ENCODE measurements at regions of chr13 and their contacts with region 1.

Region 1: DNA sequence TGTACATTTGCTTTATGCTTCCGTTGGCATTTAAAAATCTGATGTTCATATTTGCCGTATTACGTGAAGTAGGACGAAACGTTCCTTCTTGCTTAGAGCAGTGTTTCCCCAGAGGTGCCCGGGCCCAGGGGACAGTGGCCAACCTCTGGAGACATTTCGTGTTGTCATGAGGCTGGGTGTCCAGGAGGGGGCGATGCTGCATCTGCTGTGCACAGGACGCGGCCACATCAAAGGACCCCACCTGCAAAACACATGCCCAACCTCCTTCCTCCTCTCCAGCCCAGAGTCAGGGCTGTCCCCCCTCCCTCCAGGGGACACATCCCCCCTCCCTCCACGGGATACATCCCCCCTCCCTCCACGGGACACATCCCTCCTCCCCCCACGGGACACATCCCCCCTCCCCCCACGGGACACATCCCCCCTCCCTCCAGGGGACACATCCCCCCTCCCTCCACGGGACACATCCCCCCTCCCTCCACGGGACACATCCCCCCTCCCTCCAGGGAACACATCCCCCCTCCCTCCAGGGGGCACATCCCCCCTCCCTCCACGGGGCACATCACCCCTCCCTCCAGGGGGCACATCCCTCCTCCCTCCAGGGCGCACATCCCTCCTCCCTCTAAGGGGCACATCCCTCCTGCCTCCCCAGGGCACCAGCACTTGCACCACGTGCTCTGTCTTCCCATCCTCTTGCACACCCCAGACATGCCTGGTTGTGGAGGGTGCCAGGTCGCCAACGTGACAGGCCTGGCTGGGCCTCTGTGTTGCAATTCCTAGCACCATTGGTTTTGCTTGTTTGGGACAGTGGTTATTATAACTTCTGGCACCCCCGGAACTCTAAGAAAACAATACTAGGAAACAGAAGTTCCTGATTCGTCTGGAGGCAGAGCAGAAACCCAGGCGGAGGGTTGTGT is 46.7 kb downstream of the GAS6 start:
- DNase-seq: peak; percentile 79
- H3K4me3 Mint-ChIP-seq: peak overlapping the region; percentile 92
- H3K27ac Mint-ChIP-seq: peak overlapping the region; percentile 72
- H3K4me1 Mint-ChIP-seq: peaks cover 22% of the 10 kb centered on the region
- H3K27me3 Mint-ChIP-seq: no peaks in the 10 kb centered on the region

Region 2: GRCh38 chr13:113970810-113971470 is 153.7 kb after region 1 on chr13:
- intact Hi-C with region 1: no loop called
- DNase-seq: no peak
- H3K4me3 Mint-ChIP-seq: no peak overlapping the region
- H3K27ac Mint-ChIP-seq: no peak overlapping the region
- H3K4me1 Mint-ChIP-seq: no peaks in the 10 kb centered on the region
- H3K27me3 Mint-ChIP-seq: no peaks in the 10 kb centered on the region

Region 3: GRCh38 chr13:113997845-113998668 is 180.9 kb after region 1 on chr13:
- intact Hi-C with region 1: no loop called
- DNase-seq: no peak
- H3K4me3 Mint-ChIP-seq: no peak overlapping the region
- H3K27ac Mint-ChIP-seq: no peak overlapping the region
- H3K4me1 Mint-ChIP-seq: no peaks in the 10 kb centered on the region
- H3K27me3 Mint-ChIP-seq: no peaks in the 10 kb centered on the region

Region 4: GRCh38 chr13:114065141-114065925 is 248.1 kb after region 1 on chr13:
- intact Hi-C with region 1: loop called (anchors 2 kb)
- DNase-seq: peak; percentile 58
- H3K4me3 Mint-ChIP-seq: peak overlapping the region; percentile 72
- H3K27ac Mint-ChIP-seq: peak overlapping the region; percentile 91
- H3K4me1 Mint-ChIP-seq: peaks cover 51% of the 10 kb centered on the region
- H3K27me3 Mint-ChIP-seq: no peaks in the 10 kb centered on the region

Region 5: GRCh38 chr13:114128624-114129522 is 311.7 kb after region 1 on chr13:
- intact Hi-C with region 1: loop called (anchors 5 kb)
- DNase-seq: peak; percentile 84
- H3K4me3 Mint-ChIP-seq: peak overlapping the region; percentile 98
- H3K27ac Mint-ChIP-seq: peak overlapping the region; percentile 88
- H3K4me1 Mint-ChIP-seq: peaks cover 68% of the 10 kb centered on the region
- H3K27me3 Mint-ChIP-seq: peaks cover 2% of the 10 kb centered on the region

Region 6: DNA sequence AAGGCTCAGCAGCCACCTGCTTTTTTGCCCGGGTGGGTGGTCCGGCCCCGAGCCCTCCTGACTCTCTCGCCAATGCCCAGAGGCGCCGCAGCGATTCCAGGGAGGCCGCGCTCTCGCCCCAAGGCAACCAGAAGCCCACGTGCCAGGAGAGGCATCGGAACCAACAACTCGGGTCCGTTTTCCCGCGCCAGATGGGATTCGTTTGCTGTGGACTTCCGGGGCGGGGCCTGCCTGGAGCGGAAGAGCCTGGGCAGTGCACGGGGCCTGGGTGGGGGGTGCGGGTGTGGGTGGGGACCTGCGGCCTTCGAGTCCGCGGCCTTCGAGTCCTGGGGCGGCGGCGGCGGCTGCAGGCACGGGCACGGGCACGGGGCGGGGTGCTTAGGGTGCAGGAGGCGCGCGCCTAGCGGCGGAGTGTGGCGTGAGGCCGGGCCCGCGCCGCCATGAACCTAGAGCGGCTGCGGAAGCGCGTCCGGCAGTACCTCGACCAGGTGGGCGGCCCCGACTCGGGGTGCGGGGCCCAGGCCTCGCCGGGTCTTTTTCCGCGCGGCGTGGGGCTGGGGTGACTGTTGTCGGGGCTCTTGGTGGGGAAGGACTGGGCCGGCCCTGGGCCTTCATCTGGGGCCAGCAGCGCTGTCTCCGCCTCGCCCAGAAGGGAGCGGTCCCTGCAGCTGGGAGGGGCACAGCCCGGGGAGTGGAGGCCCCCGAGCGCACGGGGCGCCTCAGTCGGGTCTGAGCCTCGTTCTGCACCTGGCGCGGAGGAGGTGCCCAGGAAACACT is 417.6 kb after region 1 on chr13 and contains the start of gene CDC16:
- intact Hi-C with region 1: loop called (anchors 2 kb)
- DNase-seq: peak; percentile 80
- H3K4me3 Mint-ChIP-seq: peak within 1 kb of the TSS; percentile 88
- H3K27ac Mint-ChIP-seq: peak within 1 kb of the TSS; percentile 81
- H3K4me1 Mint-ChIP-seq: peaks cover 22% of the 10 kb centered on the region
- H3K27me3 Mint-ChIP-seq: peaks cover 8% of the 10 kb centered on the region
- total RNA-seq, gene CDC16: 91.4 and 93.2 TPM in 2 replicates